ENCODE measurements at regions of chr19 and their contacts with region 1.

Region 1: DNA sequence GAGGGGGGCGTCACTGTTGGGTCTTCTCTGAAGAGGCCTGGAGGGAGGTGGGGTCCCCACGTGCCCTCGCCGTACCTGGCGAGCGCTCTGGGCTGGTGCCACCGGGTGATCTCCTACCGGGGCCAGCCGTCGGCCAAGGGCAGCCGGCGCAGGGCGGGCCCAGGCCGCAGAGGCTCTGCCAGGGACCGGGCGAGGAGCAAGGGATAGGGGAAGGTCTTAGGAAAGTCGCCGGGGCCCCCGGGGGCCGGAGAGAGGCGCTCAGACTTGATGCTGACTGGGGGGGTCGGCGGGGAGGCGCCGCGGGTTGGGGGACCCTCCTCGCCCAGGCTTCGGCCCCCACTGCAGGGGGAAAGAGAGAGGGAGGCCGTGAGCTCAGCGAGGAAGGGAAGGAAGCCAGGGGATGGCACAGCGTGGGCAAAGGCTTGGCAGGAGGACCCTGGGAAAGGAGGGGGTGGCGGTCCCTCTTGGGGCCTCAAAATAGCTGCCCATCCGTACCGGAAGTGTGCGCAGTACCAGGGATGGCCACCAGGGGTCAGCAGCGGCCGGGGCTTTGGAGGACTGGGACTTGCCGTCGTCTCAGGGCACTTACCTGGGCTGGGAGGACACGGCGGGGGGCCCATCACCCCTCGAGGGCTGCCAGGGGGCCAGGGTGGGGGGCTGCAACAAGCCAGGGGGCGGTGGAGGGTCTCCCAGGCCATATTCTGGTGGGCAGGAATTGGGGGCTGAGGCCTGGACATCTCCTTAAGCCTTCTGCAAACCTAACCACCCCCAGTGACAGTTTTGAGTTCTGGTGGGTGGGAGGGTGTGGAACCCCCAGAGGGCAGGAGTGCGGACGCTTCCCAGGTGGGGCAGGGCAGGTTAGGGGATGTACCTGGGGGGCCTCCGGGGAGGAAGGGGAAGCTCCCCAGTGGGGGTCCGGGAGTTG is 7.7 kb upstream of the TMEM161A start:
- DNase-seq: peak; percentile 92
- ATAC-seq: peak; percentile 93
- H3K4me3 Mint-ChIP-seq: no peak overlapping the region
- H3K27ac Mint-ChIP-seq: no peak overlapping the region
- H3K4me1 Mint-ChIP-seq: peaks cover 5% of the 10 kb centered on the region
- H3K27me3 Mint-ChIP-seq: no peaks in the 10 kb centered on the region
- CTCF ChIP-seq: no peak

Region 2: DNA sequence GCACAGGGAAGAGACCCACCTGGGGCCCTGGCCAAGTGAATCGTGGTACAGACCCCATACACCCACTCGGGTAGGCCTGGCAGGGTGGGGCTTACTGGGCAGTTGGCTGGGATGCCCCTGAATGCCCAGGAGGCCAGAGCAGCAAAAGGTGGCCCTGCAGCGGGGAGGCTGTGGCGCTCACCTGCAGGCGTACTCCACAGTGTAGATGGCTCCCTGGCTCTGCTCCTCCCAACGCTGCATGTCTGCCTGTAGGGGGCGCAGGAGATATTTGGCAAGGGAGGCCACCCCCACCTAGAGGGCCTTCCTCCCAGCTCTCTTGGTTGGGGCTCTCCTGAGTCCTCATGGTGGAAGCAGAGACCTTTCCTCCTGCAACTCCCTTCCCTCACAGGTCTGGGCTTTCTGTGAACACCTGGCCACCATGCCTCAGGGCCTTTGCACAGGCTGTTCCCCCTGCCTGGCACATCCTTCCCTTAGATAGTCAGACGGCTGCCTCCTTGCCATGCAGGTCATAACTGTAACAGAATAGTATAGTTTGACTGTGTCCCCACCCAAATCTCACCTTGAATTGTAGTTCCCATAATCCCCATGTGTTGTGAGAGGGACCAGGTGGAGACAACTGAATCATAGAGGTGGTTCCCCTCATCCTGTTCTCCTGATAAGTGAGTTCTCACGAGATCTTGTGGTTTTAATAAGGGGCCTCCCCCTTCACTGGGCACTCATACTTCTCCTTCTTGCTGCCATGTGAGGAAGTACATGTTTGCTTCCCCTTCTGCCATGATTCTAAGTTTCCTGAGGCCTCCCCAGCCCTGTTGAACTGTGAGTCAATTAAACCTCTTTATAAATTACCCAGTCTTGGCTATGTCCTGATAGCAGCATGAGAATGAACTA is 40.2 kb after region 1 on chr19:
- CTCF ChIA-PET with region 1: no interaction called
- POLR2A ChIA-PET with region 1: no interaction called
- intact Hi-C with region 1: no loop called
- DNase-seq: no peak
- ATAC-seq: peak; percentile 54
- H3K4me3 Mint-ChIP-seq: no peak overlapping the region
- H3K27ac Mint-ChIP-seq: peak overlapping the region; percentile 26
- H3K4me1 Mint-ChIP-seq: peaks cover 35% of the 10 kb centered on the region
- H3K27me3 Mint-ChIP-seq: no peaks in the 10 kb centered on the region
- CTCF ChIP-seq: no peak

Region 3: DNA sequence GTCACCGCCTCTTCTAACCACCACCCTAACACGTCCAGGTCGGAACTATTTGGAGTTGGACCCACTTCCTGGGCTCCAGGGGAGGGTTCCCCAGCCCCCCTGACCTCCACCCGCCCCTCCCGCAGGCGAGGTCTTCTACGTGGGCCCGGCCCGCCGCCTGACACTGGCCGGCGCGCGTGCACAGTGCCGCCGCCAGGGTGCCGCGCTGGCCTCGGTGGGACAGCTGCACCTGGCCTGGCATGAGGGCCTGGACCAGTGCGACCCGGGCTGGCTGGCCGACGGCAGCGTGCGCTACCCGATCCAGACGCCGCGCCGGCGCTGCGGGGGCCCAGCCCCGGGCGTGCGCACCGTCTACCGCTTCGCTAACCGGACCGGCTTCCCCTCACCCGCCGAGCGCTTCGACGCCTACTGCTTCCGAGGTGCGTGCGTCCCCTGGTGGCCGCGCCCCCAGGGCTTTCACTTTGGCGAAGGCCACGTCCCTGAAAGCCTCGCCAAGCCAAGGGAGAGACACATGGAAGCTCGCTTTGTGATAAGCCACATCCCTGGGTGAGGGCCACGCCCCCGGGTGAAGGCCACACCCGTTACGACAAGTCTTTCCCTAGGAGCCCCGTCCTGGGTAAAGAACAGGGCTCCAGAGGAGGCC is 79.0 kb after region 1 on chr19:
- CTCF ChIA-PET with region 1: interaction called, 9 read pairs
- POLR2A ChIA-PET with region 1: no interaction called
- intact Hi-C with region 1: loop called (anchors 1 kb)
- DNase-seq: peak; percentile 71
- ATAC-seq: peak; percentile 96
- H3K4me3 Mint-ChIP-seq: peak overlapping the region; percentile 75
- H3K27ac Mint-ChIP-seq: no peak overlapping the region
- H3K4me1 Mint-ChIP-seq: peaks cover 4% of the 10 kb centered on the region
- H3K27me3 Mint-ChIP-seq: peaks cover 19% of the 10 kb centered on the region
- CTCF ChIP-seq: peak; percentile 20

Region 4: GRCh38 chr19:19297759-19298158 is 151.8 kb after region 1 on chr19:
- CTCF ChIA-PET with region 1: no interaction called
- POLR2A ChIA-PET with region 1: no interaction called
- intact Hi-C with region 1: no loop called
- DNase-seq: no peak
- ATAC-seq: no peak
- H3K4me3 Mint-ChIP-seq: no peak overlapping the region
- H3K27ac Mint-ChIP-seq: no peak overlapping the region
- H3K4me1 Mint-ChIP-seq: no peaks in the 10 kb centered on the region
- H3K27me3 Mint-ChIP-seq: no peaks in the 10 kb centered on the region
- CTCF ChIP-seq: no peak

Region 5: GRCh38 chr19:19482809-19483596 is 337.1 kb after region 1 on chr19:
- CTCF ChIA-PET with region 1: no interaction called
- POLR2A ChIA-PET with region 1: no interaction called
- intact Hi-C with region 1: no loop called
- DNase-seq: no peak
- ATAC-seq: no peak
- H3K4me3 Mint-ChIP-seq: no peak overlapping the region
- H3K27ac Mint-ChIP-seq: peak overlapping the region; percentile 47
- H3K4me1 Mint-ChIP-seq: peaks cover 50% of the 10 kb centered on the region
- H3K27me3 Mint-ChIP-seq: no peaks in the 10 kb centered on the region
- CTCF ChIP-seq: no peak

Region 6: GRCh38 chr19:20271215-20271926 is 1125.4 kb after region 1 on chr19:
- CTCF ChIA-PET with region 1: no interaction called
- POLR2A ChIA-PET with region 1: no interaction called
- intact Hi-C with region 1: no loop called
- DNase-seq: no peak
- ATAC-seq: peak; percentile 16
- H3K4me3 Mint-ChIP-seq: peak overlapping the region; percentile 61
- H3K27ac Mint-ChIP-seq: peak overlapping the region; percentile 46
- H3K4me1 Mint-ChIP-seq: peaks cover 47% of the 10 kb centered on the region
- H3K27me3 Mint-ChIP-seq: no peaks in the 10 kb centered on the region
- CTCF ChIP-seq: no peak